Endothelial cell of umbilical vein (primary cell): ENCODE measurements at regions of chr6 and their contacts with region 1.

Region 1: GRCh38 chr6:157021344-157021992 is 244.3 kb downstream of the ARID1B start:
- DNase-seq: peak; percentile 85
- H3K4me3 ChIP-seq: peak overlapping the region; percentile 39 to 94 (median 92)
- H3K27ac ChIP-seq: peak overlapping the region; percentile 92
- H3K4me1 ChIP-seq: peaks cover 18% of the 10 kb centered on the region
- H3K27me3 ChIP-seq: no peaks in the 10 kb centered on the region
- CTCF ChIP-seq: peak; percentile 24 to 46
- POLR2A ChIP-seq: peak; percentile 94

Region 2: GRCh38 chr6:156348424-156348823 is 673.0 kb before region 1 on chr6:
- CTCF ChIA-PET with region 1: no interaction called
- POLR2A ChIA-PET with region 1: no interaction called
- dilution Hi-C with region 1: no loop called
- intact Hi-C with region 1: loop called (anchors 2 kb)
- DNase-seq: peak; percentile 86
- H3K4me3 ChIP-seq: peak overlapping the region in 1 of 3 experiments; percentile 20
- H3K27ac ChIP-seq: peak overlapping the region; percentile 46
- H3K4me1 ChIP-seq: peaks cover 23% of the 10 kb centered on the region
- H3K27me3 ChIP-seq: no peaks in the 10 kb centered on the region
- CTCF ChIP-seq: no peak
- POLR2A ChIP-seq: no peak

Region 3: GRCh38 chr6:156866220-156867015 is 155.1 kb before region 1 on chr6:
- CTCF ChIA-PET with region 1: no interaction called
- POLR2A ChIA-PET with region 1: no interaction called
- dilution Hi-C with region 1: no loop called
- intact Hi-C with region 1: loop called (anchors 5 kb)
- DNase-seq: peak; percentile 43
- H3K4me3 ChIP-seq: no peak overlapping the region
- H3K27ac ChIP-seq: no peak overlapping the region
- H3K4me1 ChIP-seq: peaks cover 23% of the 10 kb centered on the region
- H3K27me3 ChIP-seq: no peaks in the 10 kb centered on the region
- CTCF ChIP-seq: no peak
- POLR2A ChIP-seq: no peak

Region 4: DNA sequence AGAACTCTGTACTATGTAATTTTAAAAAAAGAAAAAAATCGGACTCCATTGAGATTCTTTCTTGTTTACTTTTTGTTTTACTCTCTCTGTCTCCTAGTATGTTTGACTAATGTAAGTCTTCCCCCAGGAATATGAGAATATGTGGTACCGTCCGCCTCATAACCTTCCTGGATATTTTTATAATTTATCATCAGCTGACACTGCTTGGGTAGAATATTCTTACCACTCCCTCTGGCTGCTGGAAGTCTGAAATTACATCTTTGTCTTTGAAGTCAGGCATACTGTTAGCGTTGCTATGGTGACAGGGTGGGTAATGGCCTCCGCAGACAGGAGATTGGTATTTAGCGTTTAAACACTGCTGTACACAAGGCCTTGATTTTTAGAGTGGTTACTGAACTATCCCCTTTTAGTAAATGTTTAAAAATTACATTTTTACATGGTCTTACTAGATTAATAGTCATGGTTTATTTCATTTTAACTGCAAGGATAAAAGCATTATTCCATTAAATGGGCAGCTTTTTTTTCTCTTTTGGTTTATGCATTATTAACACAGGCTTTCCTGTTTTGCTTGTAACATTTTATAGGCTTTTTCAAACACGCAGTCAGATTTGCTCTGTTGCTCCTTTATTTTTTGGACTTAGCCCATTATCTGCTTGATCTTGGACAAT is 67.9 kb before region 1 on chr6:
- CTCF ChIA-PET with region 1: no interaction called
- POLR2A ChIA-PET with region 1: no interaction called
- dilution Hi-C with region 1: no loop called
- intact Hi-C with region 1: loop called (anchors 5 kb)
- DNase-seq: peak; percentile 93
- H3K4me3 ChIP-seq: no peak overlapping the region
- H3K27ac ChIP-seq: no peak overlapping the region
- H3K4me1 ChIP-seq: peaks cover 38% of the 10 kb centered on the region
- H3K27me3 ChIP-seq: no peaks in the 10 kb centered on the region
- CTCF ChIP-seq: peak in 1 of 2 donors; percentile 6
- POLR2A ChIP-seq: no peak

Region 5: GRCh38 chr6:157148391-157149323 is 127.2 kb after region 1 on chr6:
- CTCF ChIA-PET with region 1: no interaction called
- POLR2A ChIA-PET with region 1: no interaction called
- dilution Hi-C with region 1: no loop called
- intact Hi-C with region 1: loop called (anchors 2 kb)
- DNase-seq: peak; percentile 97
- H3K4me3 ChIP-seq: peak overlapping the region in 1 of 3 experiments; percentile 1
- H3K27ac ChIP-seq: peak overlapping the region; percentile 97
- H3K4me1 ChIP-seq: peaks cover 60% of the 10 kb centered on the region
- H3K27me3 ChIP-seq: no peaks in the 10 kb centered on the region
- CTCF ChIP-seq: no peak
- POLR2A ChIP-seq: no peak

Region 6: DNA sequence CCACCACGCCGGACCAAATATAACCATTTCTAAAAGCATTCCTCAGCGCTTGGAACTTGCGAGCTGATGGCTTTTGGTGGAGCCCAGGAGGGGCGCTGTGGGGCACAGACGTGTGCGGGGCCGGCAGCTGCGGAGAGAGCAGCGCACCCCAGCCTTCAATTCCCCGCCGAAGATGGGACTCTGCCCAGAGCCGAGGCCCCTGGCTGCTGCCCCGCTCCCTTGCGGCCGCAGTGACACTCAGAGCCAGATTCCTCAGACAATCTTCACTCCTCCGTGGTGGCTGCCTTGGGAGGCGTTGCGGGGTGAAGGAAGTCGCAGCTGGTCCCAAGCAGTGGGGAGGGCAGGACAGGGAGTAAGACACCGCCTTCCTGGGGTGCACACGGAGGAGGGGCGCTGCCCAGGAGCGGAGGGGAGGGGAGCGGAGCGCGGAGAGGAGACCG is 214.2 kb after region 1 on chr6:
- CTCF ChIA-PET with region 1: no interaction called
- POLR2A ChIA-PET with region 1: no interaction called
- dilution Hi-C with region 1: no loop called
- intact Hi-C with region 1: no loop called
- DNase-seq: peak; percentile 55
- H3K4me3 ChIP-seq: peak overlapping the region; percentile 20 to 46 (median 28)
- H3K27ac ChIP-seq: no peak overlapping the region
- H3K4me1 ChIP-seq: peaks cover 8% of the 10 kb centered on the region
- H3K27me3 ChIP-seq: peaks cover 33% of the 10 kb centered on the region in 2 experiments
- CTCF ChIP-seq: peak; percentile 54 to 78
- POLR2A ChIP-seq: no peak